ENCODE measurements at regions of chr9 and their contacts with region 1.

Region 1: GRCh38 chr9:34037626-34038025 is 11.1 kb downstream of the UBAP2 start:
- DNase-seq: no peak
- H3K4me3 ChIP-seq: no peak overlapping the region
- H3K27ac ChIP-seq: no peak overlapping the region
- H3K27me3 ChIP-seq: no peaks in the 10 kb centered on the region
- CTCF ChIP-seq: no peak

Region 2: DNA sequence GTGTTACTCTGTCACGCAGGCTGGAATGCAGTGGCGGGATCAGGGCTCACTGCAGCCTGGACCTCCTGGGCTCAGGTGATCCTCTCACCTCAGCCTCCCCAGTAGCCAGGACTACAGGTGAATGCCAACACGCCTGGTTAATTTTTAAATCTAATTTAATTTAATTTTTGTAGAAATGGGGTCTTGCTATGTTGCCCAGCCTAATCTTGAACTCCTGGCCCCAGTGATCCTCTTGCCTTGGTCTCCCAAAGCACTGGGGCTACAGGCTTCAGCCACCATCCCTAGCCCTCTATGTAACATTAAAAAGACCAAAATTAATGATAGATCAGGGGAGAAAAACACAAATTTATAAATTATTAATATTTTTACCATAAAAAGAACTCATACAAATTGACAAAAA is 22.3 kb after region 1 on chr9:
- CTCF ChIA-PET with region 1: no interaction called
- POLR2A ChIA-PET with region 1: no interaction called
- DNase-seq: no peak
- H3K4me3 ChIP-seq: no peak overlapping the region
- H3K27ac ChIP-seq: no peak overlapping the region
- H3K27me3 ChIP-seq: peaks cover 3% of the 10 kb centered on the region
- CTCF ChIP-seq: no peak

Region 3: DNA sequence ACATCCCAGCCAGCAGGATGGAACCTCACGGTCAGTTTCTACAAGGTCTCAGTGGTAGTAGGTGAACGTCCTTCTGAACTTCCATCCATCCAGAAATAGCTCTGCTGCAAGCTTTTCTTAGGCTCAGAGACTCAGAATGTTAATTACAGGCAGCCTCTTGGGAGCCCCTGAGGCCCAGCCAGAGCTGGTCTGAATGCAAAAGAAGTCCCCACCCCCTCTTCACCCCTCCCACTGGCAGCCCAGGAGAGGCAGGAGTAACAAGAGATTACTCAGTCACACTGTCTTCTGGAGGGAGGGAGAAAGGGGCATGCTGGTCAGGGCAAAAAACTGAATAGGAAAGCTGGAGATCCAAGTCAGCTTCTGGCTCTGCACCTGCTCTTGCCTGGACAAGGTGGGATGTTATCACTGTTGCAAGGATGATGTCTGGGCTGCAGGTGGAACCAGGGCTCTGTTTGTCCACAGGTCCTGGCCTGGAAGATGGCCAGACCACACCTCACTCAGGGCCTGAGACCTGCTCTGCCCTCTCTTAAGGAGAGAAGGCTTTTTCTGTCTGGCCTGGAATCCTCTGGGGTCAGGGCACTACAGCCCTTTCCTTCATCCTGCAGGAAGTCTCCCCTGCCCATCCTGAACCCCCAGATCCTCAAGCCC is 476.1 kb after region 1 on chr9:
- CTCF ChIA-PET with region 1: no interaction called
- POLR2A ChIA-PET with region 1: interaction called, 10 read pairs
- DNase-seq: no peak
- H3K4me3 ChIP-seq: no peak overlapping the region
- H3K27ac ChIP-seq: no peak overlapping the region
- H3K27me3 ChIP-seq: peaks cover 43% of the 10 kb centered on the region
- CTCF ChIP-seq: no peak